Endothelial cell of umbilical vein (primary cell): ENCODE measurements at regions of chr6 and their contacts with region 1.

Region 1: GRCh38 chr6:107114213-107114905 is 956 bp downstream of the BEND3 start:
- DNase-seq: peak; percentile 78
- H3K4me3 ChIP-seq: peak overlapping the region; percentile 53 to 69 (median 69)
- H3K27ac ChIP-seq: no peak overlapping the region
- H3K4me1 ChIP-seq: peaks cover 17% of the 10 kb centered on the region
- H3K27me3 ChIP-seq: peaks cover 9 to 24% of the 10 kb centered on the region in 2 experiments
- CTCF ChIP-seq: peak; percentile 73 to 82
- POLR2A ChIP-seq: no peak

Region 2: DNA sequence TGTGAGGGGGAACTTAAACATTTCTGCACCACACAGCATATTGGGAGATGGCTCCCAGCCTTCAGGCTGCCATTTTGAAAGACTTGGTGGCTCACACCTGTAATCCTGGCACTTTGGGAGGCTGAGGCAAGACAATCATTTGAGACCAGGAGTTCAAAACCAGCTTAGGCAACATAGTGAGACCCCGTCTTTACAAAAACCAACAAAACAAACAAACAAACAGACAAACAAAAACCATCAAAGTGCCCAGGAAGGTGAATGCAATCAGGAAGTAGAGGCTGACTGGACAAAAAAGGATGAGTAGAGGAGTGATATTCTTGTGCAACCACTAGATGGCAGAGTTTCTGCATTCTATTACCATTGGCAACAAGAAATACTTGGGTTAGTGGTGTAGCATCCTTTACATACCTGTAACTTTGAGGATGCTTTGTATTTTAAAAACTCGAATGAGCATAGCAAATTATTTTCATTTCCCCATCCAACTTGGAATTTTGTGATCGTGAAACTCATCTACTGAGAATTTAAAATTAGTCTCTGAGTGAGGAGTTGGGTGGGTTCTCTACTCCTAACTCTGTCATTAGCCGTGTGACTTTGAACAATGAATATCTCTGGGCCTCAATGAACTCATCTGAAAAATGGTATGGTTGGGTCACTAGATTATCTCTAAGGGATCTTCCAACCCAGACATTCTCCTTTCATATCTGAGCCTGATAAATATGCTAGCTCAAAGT is 669.4 kb before region 1 on chr6:
- CTCF ChIA-PET with region 1: interaction called, 3 read pairs
- POLR2A ChIA-PET with region 1: no interaction called
- dilution Hi-C with region 1: no loop called
- intact Hi-C with region 1: loop called (anchors 10 kb)
- DNase-seq: peak; percentile 52
- H3K4me3 ChIP-seq: no peak overlapping the region
- H3K27ac ChIP-seq: no peak overlapping the region
- H3K4me1 ChIP-seq: no peaks in the 10 kb centered on the region
- H3K27me3 ChIP-seq: peaks cover 14 to 29% of the 10 kb centered on the region in 2 experiments
- CTCF ChIP-seq: peak; percentile 61 to 68
- POLR2A ChIP-seq: no peak

Region 3: GRCh38 chr6:106997390-106998158 is 116.8 kb before region 1 on chr6:
- CTCF ChIA-PET with region 1: interaction called, 15 read pairs
- POLR2A ChIA-PET with region 1: no interaction called
- dilution Hi-C with region 1: no loop called
- intact Hi-C with region 1: no loop called
- DNase-seq: peak; percentile 47
- H3K4me3 ChIP-seq: no peak overlapping the region
- H3K27ac ChIP-seq: no peak overlapping the region
- H3K4me1 ChIP-seq: no peaks in the 10 kb centered on the region
- H3K27me3 ChIP-seq: no peaks in the 10 kb centered on the region
- CTCF ChIP-seq: peak; percentile 85 to 88
- POLR2A ChIP-seq: no peak

Region 4: GRCh38 chr6:107075951-107076381 is 38.4 kb before region 1 on chr6:
- CTCF ChIA-PET with region 1: interaction called, 5 read pairs
- POLR2A ChIA-PET with region 1: no interaction called
- dilution Hi-C with region 1: no loop called
- intact Hi-C with region 1: loop called (anchors 5 kb)
- DNase-seq: no peak
- H3K4me3 ChIP-seq: no peak overlapping the region
- H3K27ac ChIP-seq: no peak overlapping the region
- H3K4me1 ChIP-seq: no peaks in the 10 kb centered on the region
- H3K27me3 ChIP-seq: no peaks in the 10 kb centered on the region
- CTCF ChIP-seq: no peak
- POLR2A ChIP-seq: no peak

Region 5: DNA sequence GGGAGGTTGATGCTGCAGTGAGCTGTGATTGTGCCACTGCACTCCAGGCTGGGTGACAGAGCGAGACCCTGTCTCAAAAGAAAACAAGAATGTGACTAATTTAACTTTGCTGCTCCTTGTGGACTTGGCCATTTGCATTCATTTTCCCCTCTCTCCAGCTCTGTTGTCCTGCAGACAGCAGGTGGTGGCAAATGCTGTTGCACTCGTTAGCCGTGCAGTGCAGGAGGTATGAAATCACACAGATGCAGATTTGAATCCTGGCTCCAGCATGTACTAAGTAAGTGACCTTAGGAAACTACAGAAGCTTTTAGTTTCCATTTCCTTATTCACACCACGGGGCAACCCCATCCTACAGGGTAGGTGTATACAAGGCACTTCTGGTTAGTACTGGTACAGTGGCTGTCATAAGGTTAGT is 10.6 kb after region 1 on chr6:
- CTCF ChIA-PET with region 1: interaction called, 11 read pairs
- POLR2A ChIA-PET with region 1: no interaction called
- dilution Hi-C with region 1: no loop called
- intact Hi-C with region 1: no loop called
- DNase-seq: no peak
- H3K4me3 ChIP-seq: no peak overlapping the region
- H3K27ac ChIP-seq: no peak overlapping the region
- H3K4me1 ChIP-seq: peaks cover 6% of the 10 kb centered on the region
- H3K27me3 ChIP-seq: no peaks in the 10 kb centered on the region
- CTCF ChIP-seq: no peak
- POLR2A ChIP-seq: no peak

Region 6: GRCh38 chr6:107489636-107490565 is 375.5 kb after region 1 on chr6 and contains the start of gene SOBP:
- CTCF ChIA-PET with region 1: interaction called, 5 read pairs
- POLR2A ChIA-PET with region 1: no interaction called
- dilution Hi-C with region 1: no loop called
- intact Hi-C with region 1: loop called (anchors 10 kb)
- DNase-seq: peak; percentile 54
- H3K4me3 ChIP-seq: peak within 1 kb of the TSS; percentile 61 to 99 (median 88)
- H3K27ac ChIP-seq: peak within 1 kb of the TSS; percentile 59
- H3K4me1 ChIP-seq: peaks cover 50% of the 10 kb centered on the region
- H3K27me3 ChIP-seq: peaks cover 13 to 22% of the 10 kb centered on the region in 2 experiments
- CTCF ChIP-seq: peak; percentile 2 to 13
- POLR2A ChIP-seq: no peak
- total RNA-seq, gene SOBP: 6.1 and 6.6 TPM in 2 replicates